Activated CD8-positive, alpha-beta T cell treated with anti-CD3 and anti-CD28 coated beads, Interleukin-2, amount 10 ng/mL, durations not matched to agents 7 days and 5 days (primary cell): ENCODE measurements at regions of chr2 and their contacts with region 1.

Region 1: DNA sequence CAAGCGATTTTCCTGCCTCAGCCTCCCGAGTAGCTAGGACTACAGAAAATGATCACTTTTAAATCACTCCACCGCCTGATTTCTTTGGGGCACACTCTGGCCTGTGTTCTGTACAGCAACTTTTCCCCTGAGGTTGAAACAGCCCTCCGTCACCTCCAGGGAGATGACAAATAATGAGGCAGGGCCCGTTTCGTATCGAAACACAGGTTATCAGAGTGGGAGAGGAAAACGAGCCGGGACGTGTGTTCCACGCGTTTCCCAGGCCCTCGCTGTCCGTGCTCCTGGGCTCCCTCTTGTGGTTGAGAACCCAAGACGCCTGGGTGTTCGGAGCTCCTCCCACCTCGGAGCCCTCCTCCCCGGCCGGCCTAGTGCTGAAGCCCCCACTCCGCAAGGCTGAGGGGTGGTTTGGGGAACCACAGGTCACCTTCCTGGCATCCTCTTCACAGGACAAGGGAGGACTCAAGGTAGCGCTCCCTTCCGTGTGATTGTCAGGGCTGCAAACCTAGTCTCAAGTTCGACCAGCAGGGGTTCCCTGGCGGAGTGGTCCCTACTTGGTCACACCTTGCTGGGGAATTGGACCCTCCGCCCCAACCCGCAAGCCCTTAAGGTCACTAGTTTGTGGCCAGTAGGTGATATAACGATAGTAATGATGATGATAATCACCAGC is 12.8 kb downstream of the ATP6V1B1 start:
- DNase-seq: peak; percentile 82
- ATAC-seq: peak; percentile 99
- H3K4me3 Mint-ChIP-seq: peak overlapping the region; percentile 48
- H3K27ac Mint-ChIP-seq: no peak overlapping the region
- H3K4me1 Mint-ChIP-seq: peaks cover 20% of the 10 kb centered on the region
- H3K27me3 Mint-ChIP-seq: peaks cover 22% of the 10 kb centered on the region

Region 2: GRCh38 chr2:70851704-70852103 is 96.8 kb before region 1 on chr2:
- CTCF ChIA-PET with region 1: interaction called, 19 read pairs
- POLR2A ChIA-PET with region 1: no interaction called
- DNase-seq: peak; percentile 55
- ATAC-seq: peak; percentile 99
- H3K4me3 Mint-ChIP-seq: peak overlapping the region; percentile 26
- H3K27ac Mint-ChIP-seq: peak overlapping the region; percentile 78
- H3K4me1 Mint-ChIP-seq: peaks cover 31% of the 10 kb centered on the region
- H3K27me3 Mint-ChIP-seq: peaks cover 3% of the 10 kb centered on the region

Region 3: DNA sequence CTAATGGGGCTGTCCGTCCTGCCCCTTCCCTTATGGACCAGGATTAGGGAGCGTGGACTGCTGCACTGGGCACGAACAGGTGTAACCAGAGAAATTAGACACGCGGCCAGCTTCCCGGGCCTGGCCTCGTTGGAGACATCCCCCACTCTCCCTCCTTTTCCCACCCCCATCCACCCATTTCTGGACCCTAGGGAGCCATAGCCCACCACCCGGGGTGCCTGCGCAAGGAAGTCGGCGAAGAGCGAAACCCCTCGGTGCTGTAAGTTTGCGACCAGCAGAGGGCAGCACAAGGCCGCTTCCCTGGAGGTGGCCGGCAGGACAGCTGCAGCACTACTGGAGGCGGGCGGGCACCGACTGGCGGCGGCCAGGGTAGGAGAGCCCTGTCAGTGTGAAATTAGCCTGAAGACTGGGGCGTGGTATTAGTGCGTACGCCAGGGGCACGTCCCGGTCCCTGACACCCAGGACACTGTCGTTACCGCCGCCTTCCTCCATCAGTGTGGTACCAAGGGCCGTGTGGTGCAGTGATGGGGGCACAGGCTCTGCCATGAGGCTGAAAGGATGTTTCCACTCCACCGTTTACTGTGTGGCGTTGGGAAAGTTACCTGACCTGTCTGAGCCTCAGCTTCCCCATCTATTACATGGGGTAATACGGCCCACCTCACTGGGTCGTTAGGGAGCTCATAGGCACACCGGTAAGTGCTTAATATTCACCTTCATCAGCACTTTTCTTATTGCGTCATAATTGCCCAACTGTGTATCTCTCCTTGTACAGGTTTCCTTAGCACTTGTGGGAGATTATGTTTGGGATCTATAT is 76.9 kb before region 1 on chr2:
- CTCF ChIA-PET with region 1: interaction called, 95 read pairs
- POLR2A ChIA-PET with region 1: no interaction called
- DNase-seq: peak; percentile 87
- ATAC-seq: peak; percentile 95
- H3K4me3 Mint-ChIP-seq: no peak overlapping the region
- H3K27ac Mint-ChIP-seq: no peak overlapping the region
- H3K4me1 Mint-ChIP-seq: peaks cover 4% of the 10 kb centered on the region
- H3K27me3 Mint-ChIP-seq: peaks cover 24% of the 10 kb centered on the region

Region 4: GRCh38 chr2:70964596-70965386 is 16.3 kb after region 1 on chr2:
- CTCF ChIA-PET with region 1: interaction called, 27 read pairs
- POLR2A ChIA-PET with region 1: interaction called, 4 read pairs
- DNase-seq: peak; percentile 84
- ATAC-seq: peak; percentile 97
- H3K4me3 Mint-ChIP-seq: peak overlapping the region; percentile 82
- H3K27ac Mint-ChIP-seq: peak overlapping the region; percentile 50
- H3K4me1 Mint-ChIP-seq: peaks cover 5% of the 10 kb centered on the region
- H3K27me3 Mint-ChIP-seq: peaks cover 25% of the 10 kb centered on the region